Head of caudate nucleus (tissue), 42 donors: ENCODE measurements at regions of chr11 and their contacts with region 1.

Region 1: DNA sequence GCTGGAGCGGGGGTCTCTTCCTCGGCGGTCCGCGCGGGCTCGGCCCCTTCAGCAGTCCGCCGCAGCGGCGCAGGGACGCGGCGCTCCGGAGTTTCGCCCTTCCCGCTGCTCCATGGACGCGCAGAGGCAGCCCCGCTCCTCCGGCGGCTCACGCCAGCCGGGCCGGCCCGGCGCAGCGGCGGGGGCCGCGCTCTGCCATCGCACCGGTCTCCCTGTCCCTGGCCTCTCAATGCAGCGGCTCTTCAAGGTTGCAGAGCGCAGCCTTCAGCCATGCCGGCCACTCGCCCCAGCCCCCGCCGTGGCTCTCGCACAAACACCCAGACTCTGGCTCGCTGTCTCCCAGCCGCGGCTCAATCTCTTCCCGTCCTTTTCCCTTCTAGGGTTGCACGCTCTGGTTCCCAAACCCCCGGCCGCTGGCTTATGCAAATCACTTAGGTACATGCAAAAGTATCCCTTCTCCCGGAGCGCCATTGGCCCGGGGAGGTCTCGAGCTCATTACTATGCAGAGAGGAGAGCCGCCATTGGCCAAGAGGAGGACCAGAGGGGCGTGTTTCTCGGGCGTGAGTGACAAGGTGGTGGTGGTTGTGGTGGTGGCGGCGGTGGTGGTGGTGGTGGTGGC is at the start of gene LGR4:
- DNase-seq: peak; percentile 76 to 97 (median 94)

Region 2: DNA sequence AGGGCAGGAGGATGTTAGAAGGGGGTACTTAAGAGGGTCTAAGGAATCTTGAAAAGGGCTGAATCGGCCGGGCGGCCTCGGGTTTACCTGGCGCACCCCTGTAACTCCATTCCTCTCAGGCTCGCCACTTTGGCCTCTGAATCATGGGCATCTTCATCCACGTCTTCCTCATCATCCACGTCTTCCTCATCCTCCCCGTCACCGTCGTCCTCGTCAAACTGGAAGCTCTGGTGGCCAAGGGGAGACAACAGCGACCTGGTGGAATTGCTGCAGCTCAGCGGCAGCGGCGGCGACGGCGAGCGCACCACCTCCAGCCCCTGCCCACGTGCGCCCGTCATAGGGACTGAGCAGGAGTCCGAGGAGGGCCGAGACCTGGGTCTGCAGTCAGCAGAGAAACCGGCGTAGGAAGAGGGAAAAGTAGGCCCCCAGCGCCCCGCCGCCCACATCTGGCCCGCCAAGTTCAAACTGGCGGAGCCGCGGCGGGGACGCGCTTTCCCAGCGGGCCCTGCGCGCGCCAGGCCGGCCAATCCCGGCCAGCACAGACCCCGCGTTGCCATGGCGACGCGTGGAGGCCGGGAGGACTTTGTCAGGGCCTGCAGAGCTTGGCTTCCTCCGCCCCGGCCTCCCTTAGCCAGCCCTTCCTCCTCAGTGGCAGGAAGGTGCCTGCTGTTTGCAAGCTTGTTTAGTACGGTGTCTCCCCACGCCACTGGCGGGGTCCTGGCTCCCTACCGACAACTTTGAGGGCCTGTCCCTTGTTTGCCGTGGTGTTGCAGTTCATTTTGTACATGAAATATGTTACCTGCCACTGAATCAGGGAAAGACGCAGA is 109.5 kb before region 1 on chr11 and contains the start of gene CCDC34:
- intact Hi-C with region 1: loop called (anchors 10 kb)
- DNase-seq: peak; percentile 64 to 94 (median 88)

Region 3: DNA sequence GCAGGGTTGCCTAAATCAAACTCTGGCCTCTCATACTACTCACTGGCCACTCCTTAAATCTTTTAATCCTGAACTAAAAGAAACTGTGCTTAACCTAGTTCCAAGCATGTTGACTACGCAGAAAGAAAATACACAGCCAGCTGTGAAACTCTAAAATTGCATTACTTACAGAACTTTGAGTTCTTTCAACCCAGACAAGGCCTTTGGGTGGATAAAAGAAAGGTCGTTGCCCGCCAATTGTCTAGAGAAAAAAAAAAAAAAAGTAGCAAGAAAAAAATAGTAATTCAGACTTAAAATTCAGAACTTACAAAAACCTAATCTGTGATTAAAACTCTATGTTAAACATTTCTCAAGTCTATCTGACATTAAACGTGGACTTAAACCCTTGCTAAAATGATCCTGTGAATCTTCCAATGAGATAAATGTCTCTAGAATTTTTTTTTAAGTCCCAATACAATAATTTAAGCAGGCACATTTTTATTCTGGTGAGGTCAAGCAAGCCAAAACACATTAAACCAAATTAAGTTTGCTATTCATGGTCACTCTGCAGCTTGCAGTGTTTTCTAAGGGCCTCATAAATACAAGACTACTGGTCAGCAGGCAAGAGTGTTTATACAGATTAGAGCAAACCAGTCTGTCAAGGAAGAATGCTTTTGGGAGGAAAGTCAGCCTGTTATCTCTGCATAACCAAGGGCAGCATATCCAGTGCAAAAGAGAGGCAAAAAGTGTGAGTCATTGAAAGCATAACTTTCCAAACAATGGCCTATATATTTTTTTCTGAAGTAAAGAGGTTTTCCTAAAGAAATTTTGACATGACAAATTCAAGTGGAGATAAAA is 80.0 kb before region 1 on chr11:
- intact Hi-C with region 1: loop called (anchors 5 kb)
- DNase-seq: no peak

Region 4: DNA sequence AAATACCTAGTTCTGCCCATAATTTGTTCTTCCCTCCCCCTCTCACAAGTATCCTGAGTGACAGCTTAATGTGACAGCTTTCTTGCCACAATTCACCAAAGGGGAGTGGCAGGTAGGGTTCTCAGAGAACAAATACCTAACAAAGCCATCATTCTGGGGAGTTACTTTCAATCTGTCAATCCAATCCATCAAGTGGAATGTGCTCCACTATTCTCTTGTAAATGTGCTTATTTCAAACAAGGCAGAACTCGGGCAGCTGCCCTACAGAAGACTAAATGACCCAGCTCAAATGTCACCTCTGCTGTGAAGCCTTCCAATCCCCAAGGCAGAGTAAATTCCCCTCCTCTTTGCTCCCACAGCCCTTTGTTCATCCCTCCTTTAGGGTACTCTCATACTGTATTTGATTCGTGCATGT is 27.7 kb before region 1 on chr11:
- intact Hi-C with region 1: no loop called
- DNase-seq: peak in 1 of 42 donors; percentile 30